ENCODE measurements at regions of chr11 and their contacts with region 1.

Region 1: GRCh38 chr11:93225662-93226061 is 27.9 kb upstream of the SLC36A4 start:
- DNase-seq: peak; percentile 16
- ATAC-seq: peak; percentile 51
- H3K4me3 ChIP-seq: no peak overlapping the region
- H3K27ac ChIP-seq: no peak overlapping the region
- H3K4me1 ChIP-seq: no peaks in the 10 kb centered on the region
- H3K27me3 ChIP-seq: peaks cover 2% of the 10 kb centered on the region; the same call in 1 of the 2 replicates
- CTCF ChIP-seq: peak; percentile 52
- POLR2A ChIP-seq: no peak
- RAD21 ChIP-seq: peak; percentile 59

Region 2: DNA sequence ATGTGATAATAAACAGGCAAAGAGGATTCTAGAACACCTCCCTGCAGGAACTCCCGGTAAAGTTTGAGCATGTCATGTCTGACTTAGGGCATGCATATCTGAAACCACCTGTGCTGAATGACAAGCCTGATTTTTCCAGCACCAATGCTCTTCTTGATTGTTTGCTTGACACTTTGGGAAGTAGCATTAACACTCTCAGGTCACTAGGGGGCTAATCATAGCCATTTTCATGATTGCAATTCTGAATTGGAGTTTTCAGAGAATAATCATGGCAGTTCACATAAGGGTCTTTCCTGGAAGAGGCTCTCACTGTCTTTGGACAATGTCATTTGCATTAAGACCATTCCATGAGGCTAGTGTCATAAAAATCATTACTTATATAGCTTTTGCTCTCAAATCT is 490.6 kb before region 1 on chr11:
- CTCF ChIA-PET with region 1: no interaction called
- POLR2A ChIA-PET with region 1: no interaction called
- dilution Hi-C with region 1: no loop called
- in situ Hi-C with region 1: no loop called
- intact Hi-C with region 1: loop called (anchors 10 kb)
- DNase-seq: no peak
- ATAC-seq: no peak
- H3K4me3 ChIP-seq: no peak overlapping the region
- H3K27ac ChIP-seq: no peak overlapping the region
- H3K4me1 ChIP-seq: no peaks in the 10 kb centered on the region
- H3K27me3 ChIP-seq: no peaks in the 10 kb centered on the region
- CTCF ChIP-seq: 0 out of 2 replicates have a peak, but pooled peaks have one; percentile 12
- POLR2A ChIP-seq: no peak
- RAD21 ChIP-seq: no peak

Region 3: GRCh38 chr11:93564895-93565294 is 339.2 kb after region 1 on chr11:
- CTCF ChIA-PET with region 1: no interaction called
- POLR2A ChIA-PET with region 1: no interaction called
- dilution Hi-C with region 1: no loop called
- in situ Hi-C with region 1: no loop called
- intact Hi-C with region 1: no loop called
- DNase-seq: no peak
- ATAC-seq: no peak
- H3K4me3 ChIP-seq: no peak overlapping the region
- H3K27ac ChIP-seq: no peak overlapping the region
- H3K4me1 ChIP-seq: no peaks in the 10 kb centered on the region
- H3K27me3 ChIP-seq: peaks cover 1% of the 10 kb centered on the region; the same call in 1 of the 2 replicates
- CTCF ChIP-seq: no peak
- POLR2A ChIP-seq: no peak
- RAD21 ChIP-seq: no peak

Measured in IMR-90 (cell line).